ENCODE measurements at regions of chr1 and their contacts with region 1.

Region 1: GRCh38 chr1:155227261-155228095 is 19.0 kb downstream of the MTX1 start:
- DNase-seq: peak; percentile 100
- H3K4me3 ChIP-seq: peak overlapping the region; percentile 83
- H3K27ac ChIP-seq: peak overlapping the region; percentile 89
- H3K4me1 ChIP-seq: peaks cover 50% of the 10 kb centered on the region
- CTCF ChIP-seq: no peak

Region 2: GRCh38 chr1:155244368-155245162 is 17.1 kb after region 1 on chr1:
- CTCF ChIA-PET with region 1: no interaction called
- POLR2A ChIA-PET with region 1: interaction called, 4 read pairs
- intact Hi-C with region 1: loop called (anchors 1 kb)
- DNase-seq: peak; percentile 100
- H3K4me3 ChIP-seq: peak overlapping the region; percentile 81
- H3K27ac ChIP-seq: peak overlapping the region; percentile 82
- H3K4me1 ChIP-seq: peaks cover 38% of the 10 kb centered on the region
- CTCF ChIP-seq: peak; percentile 63